MCF 10A (cell line): ENCODE measurements at regions of chr19 and their contacts with region 1.

Region 1: GRCh38 chr19:40090241-40091204 is at the start of gene ZNF780A:
- DNase-seq: peak; percentile 65
- H3K4me3 Mint-ChIP-seq: peak within 1 kb of the TSS; percentile 98
- H3K27ac Mint-ChIP-seq: peak within 1 kb of the TSS; percentile 97
- H3K4me1 Mint-ChIP-seq: peaks cover 12% of the 10 kb centered on the region
- H3K27me3 Mint-ChIP-seq: no peaks in the 10 kb centered on the region
- CTCF ChIP-seq: no peak
- total RNA-seq, gene ZNF780A: 9.7 and 14.0 TPM in 2 replicates

Region 2: GRCh38 chr19:39996811-39997594 is 93.5 kb before region 1 on chr19 and contains the start of gene ZNF546:
- CTCF ChIA-PET with region 1: no interaction called
- POLR2A ChIA-PET with region 1: interaction called, 16 read pairs
- intact Hi-C with region 1: loop called (anchors 2 kb)
- DNase-seq: peak; percentile 91
- H3K4me3 Mint-ChIP-seq: peak within 1 kb of the TSS; percentile 91
- H3K27ac Mint-ChIP-seq: peak within 1 kb of the TSS; percentile 93
- H3K4me1 Mint-ChIP-seq: peaks cover 22% of the 10 kb centered on the region
- H3K27me3 Mint-ChIP-seq: no peaks in the 10 kb centered on the region
- CTCF ChIP-seq: no peak
- total RNA-seq, gene ZNF546: 5.2 and 6.3 TPM in 2 replicates

Region 3: DNA sequence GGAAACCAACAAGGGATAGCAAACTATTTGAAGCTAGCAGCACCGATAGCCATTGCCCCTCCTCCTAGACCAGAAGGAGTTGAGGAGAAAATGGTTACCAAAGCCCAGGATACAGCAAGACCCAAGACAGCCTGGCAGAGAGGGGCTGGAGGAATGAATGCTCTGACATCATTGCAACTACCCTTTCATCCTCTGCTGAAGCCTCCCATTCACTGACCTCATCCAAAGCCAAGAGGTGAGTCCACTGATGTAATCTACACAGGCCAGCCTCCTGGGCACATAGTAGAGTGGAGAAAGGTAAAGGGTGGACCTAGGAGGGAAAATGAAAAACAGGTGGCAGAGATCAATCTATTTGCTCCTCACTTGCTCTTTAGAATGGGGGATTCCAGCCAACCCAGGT is 43.0 kb after region 1 on chr19:
- CTCF ChIA-PET with region 1: no interaction called
- POLR2A ChIA-PET with region 1: no interaction called
- intact Hi-C with region 1: no loop called
- DNase-seq: no peak
- H3K4me3 Mint-ChIP-seq: no peak overlapping the region
- H3K27ac Mint-ChIP-seq: no peak overlapping the region
- H3K4me1 Mint-ChIP-seq: no peaks in the 10 kb centered on the region
- H3K27me3 Mint-ChIP-seq: peaks cover 80% of the 10 kb centered on the region
- CTCF ChIP-seq: no peak